ENCODE measurements at regions of chr1 and their contacts with region 1.

Region 1: DNA sequence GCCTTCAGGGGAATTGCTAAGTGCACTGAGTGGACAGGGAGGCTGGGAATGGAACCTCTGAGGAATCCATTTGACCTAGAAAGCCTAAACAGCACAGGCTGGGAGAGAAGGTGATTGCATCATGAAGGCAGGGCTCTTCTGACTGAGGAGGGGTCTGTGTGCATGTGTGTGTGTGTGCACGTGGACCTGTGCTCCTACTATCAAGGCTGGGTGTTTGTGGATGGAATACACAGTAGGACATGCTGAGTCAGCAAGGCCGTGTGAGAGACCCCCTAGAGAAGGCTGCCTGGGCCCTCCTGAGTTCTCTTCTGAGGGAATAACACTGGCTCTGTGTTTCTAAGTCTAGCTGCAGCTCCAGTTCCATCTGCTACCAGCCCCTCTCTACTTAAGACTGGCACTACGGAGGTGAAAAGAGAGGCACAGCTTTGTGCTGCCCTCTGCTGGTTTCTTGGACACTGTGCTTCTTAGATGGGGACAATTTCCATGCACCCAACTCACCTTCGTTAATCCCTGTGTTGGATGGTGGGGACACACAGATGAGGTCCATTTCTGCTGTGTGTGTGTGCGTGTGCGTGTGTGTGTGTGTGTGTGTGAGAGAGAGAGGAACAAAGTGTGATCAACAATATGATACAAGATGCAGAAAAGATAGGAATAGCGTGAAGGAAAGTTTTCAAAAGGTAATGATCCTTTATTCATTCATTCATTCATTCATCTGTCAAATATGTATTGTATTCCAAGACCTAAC is 6.2 kb upstream of the EFCAB14 start:
- DNase-seq: peak; percentile 56
- H3K4me3 Mint-ChIP-seq: no peak overlapping the region
- H3K27ac Mint-ChIP-seq: no peak overlapping the region
- H3K4me1 Mint-ChIP-seq: no peaks in the 10 kb centered on the region
- H3K27me3 Mint-ChIP-seq: peaks cover 16% of the 10 kb centered on the region

Region 2: DNA sequence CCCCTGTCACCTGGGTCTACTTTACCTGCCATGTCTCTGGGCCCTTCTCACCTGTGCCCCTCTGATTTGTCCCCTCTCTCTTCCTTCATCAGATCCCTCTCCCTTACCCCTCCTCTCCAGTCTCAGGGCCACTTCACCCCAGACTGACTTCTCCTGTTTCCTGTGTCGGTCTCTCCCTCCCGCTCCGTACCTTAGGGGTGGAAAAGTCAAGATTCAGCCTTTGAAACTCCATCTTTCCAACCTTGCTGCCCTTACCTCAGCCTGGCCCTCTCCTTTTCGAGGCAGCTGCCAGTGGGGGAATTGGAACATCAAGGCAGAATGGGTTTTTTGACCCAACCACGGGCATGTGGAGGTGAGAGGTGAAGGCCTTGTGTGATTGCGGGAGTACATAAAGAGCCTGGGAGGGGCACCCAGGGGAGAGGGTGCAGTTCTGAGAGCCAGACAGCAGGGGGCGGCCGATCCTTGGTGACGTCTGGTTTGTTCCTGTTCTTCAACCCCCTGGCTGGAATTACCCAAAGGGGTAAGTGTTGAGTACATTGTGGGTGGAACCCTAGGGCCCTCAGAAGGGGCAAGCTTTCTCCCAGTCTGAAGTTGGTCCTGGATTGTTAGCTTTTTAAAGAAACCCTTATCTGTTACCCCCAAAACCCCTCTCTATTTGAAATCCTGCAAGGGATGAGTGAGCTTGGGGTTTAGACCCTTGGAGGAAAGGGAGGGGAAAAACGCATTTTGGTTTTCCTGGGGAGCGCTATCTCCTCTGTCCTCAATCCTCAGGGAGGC is 247.8 kb before region 1 on chr1:
- intact Hi-C with region 1: loop called (anchors 1 kb)
- DNase-seq: peak; percentile 63
- H3K4me3 Mint-ChIP-seq: no peak overlapping the region
- H3K27ac Mint-ChIP-seq: no peak overlapping the region
- H3K4me1 Mint-ChIP-seq: no peaks in the 10 kb centered on the region
- H3K27me3 Mint-ChIP-seq: peaks cover 47% of the 10 kb centered on the region

Region 3: DNA sequence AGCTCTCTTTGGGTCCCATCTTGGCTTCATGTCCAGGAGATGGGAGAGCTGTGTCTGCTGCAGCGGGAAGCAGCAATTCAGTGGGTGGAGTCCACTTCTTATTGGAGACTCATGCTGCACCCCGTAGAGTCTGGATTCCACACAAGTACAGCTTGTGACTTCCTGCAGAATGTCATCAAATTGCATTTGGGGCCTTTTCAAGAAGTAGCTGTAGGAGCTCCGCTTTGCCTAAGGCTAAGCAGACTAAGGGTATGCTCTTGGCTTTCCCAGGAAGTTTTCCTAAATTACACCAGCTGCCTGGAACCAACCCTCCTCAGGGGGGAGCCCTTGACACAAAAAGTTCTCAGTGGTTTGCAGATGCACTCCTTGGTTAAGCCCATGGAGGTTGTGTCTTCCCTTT is 102.8 kb before region 1 on chr1:
- intact Hi-C with region 1: loop called (anchors 1 kb)
- DNase-seq: no peak
- H3K4me3 Mint-ChIP-seq: no peak overlapping the region
- H3K27ac Mint-ChIP-seq: no peak overlapping the region
- H3K4me1 Mint-ChIP-seq: peaks cover 20% of the 10 kb centered on the region
- H3K27me3 Mint-ChIP-seq: peaks cover 2% of the 10 kb centered on the region